B cell (primary cell): ENCODE measurements at regions of chr6 and their contacts with region 1.

Region 1: GRCh38 chr6:12233693-12234571 is 56.2 kb upstream of the EDN1 start:
- DNase-seq: peak; percentile 75
- ATAC-seq: peak; percentile 77
- H3K4me3 ChIP-seq: no peak overlapping the region
- H3K4me3 Mint-ChIP-seq: no peak overlapping the region
- H3K27ac ChIP-seq: no peak overlapping the region
- H3K27ac Mint-ChIP-seq: no peak overlapping the region
- H3K4me1 ChIP-seq: peaks cover 0 to 5% of the 10 kb centered on the region in 2 donors
- H3K4me1 Mint-ChIP-seq: peaks cover 10% of the 10 kb centered on the region
- H3K27me3 ChIP-seq: no peaks in the 10 kb centered on the region
- H3K27me3 Mint-ChIP-seq: no peaks in the 10 kb centered on the region
- CTCF ChIP-seq: peak; percentile 77

Region 2: GRCh38 chr6:11700118-11700718 is 533.7 kb before region 1 on chr6:
- CTCF ChIA-PET with region 1: interaction called, 31 read pairs
- POLR2A ChIA-PET with region 1: no interaction called
- intact Hi-C with region 1: loop called (anchors 1 kb)
- DNase-seq: peak; percentile 61
- ATAC-seq: no peak
- H3K4me3 ChIP-seq: no peak overlapping the region
- H3K4me3 Mint-ChIP-seq: no peak overlapping the region
- H3K27ac ChIP-seq: no peak overlapping the region
- H3K27ac Mint-ChIP-seq: no peak overlapping the region
- H3K4me1 ChIP-seq: no peaks in the 10 kb centered on the region
- H3K4me1 Mint-ChIP-seq: no peaks in the 10 kb centered on the region
- H3K27me3 ChIP-seq: peaks cover 0 to 4% (median 2%) of the 10 kb centered on the region in 4 experiments
- H3K27me3 Mint-ChIP-seq: no peaks in the 10 kb centered on the region
- CTCF ChIP-seq: peak; percentile 69

Region 3: GRCh38 chr6:12033770-12034169 is 200.2 kb before region 1 on chr6:
- CTCF ChIA-PET with region 1: interaction called, 4 read pairs
- POLR2A ChIA-PET with region 1: no interaction called
- intact Hi-C with region 1: loop called (anchors 10 kb)
- DNase-seq: no peak
- ATAC-seq: no peak
- H3K4me3 ChIP-seq: no peak overlapping the region
- H3K4me3 Mint-ChIP-seq: no peak overlapping the region
- H3K27ac ChIP-seq: no peak overlapping the region
- H3K27ac Mint-ChIP-seq: no peak overlapping the region
- H3K4me1 ChIP-seq: peaks cover 21% of the 10 kb centered on the region in 2 donors
- H3K4me1 Mint-ChIP-seq: peaks cover 54% of the 10 kb centered on the region
- H3K27me3 ChIP-seq: no peaks in the 10 kb centered on the region
- H3K27me3 Mint-ChIP-seq: no peaks in the 10 kb centered on the region
- CTCF ChIP-seq: no peak

Region 4: DNA sequence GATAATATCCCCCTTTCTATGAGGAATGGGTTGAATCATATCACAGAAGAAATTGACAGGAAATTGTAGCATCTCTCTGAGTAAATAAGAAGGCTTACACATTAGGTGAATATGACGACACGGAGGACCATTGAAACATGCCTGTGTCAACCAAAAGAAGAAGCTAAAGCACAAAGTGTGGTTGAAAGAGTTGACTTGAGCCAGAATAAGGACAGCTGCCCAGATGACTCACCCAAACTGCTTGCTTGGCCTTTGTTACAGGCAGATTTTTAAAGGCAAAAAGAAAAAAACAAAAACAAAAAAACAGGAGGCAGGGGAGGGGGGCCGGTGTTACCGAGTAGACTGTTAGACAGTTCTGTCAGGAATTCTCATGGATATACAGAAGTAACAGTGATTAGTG is 73.6 kb before region 1 on chr6:
- CTCF ChIA-PET with region 1: no interaction called
- POLR2A ChIA-PET with region 1: no interaction called
- intact Hi-C with region 1: no loop called
- DNase-seq: no peak
- ATAC-seq: no peak
- H3K4me3 ChIP-seq: no peak overlapping the region
- H3K4me3 Mint-ChIP-seq: no peak overlapping the region
- H3K27ac ChIP-seq: no peak overlapping the region
- H3K27ac Mint-ChIP-seq: no peak overlapping the region
- H3K4me1 ChIP-seq: peaks cover 0 to 4% of the 10 kb centered on the region in 2 donors
- H3K4me1 Mint-ChIP-seq: peaks cover 14% of the 10 kb centered on the region
- H3K27me3 ChIP-seq: no peaks in the 10 kb centered on the region
- H3K27me3 Mint-ChIP-seq: no peaks in the 10 kb centered on the region
- CTCF ChIP-seq: no peak

Region 5: GRCh38 chr6:12245763-12246718 is 12.1 kb after region 1 on chr6:
- CTCF ChIA-PET with region 1: interaction called, 10 read pairs
- POLR2A ChIA-PET with region 1: no interaction called
- intact Hi-C with region 1: no loop called
- DNase-seq: no peak
- ATAC-seq: no peak
- H3K4me3 ChIP-seq: no peak overlapping the region
- H3K4me3 Mint-ChIP-seq: no peak overlapping the region
- H3K27ac ChIP-seq: no peak overlapping the region
- H3K27ac Mint-ChIP-seq: no peak overlapping the region
- H3K4me1 ChIP-seq: no peaks in the 10 kb centered on the region
- H3K4me1 Mint-ChIP-seq: no peaks in the 10 kb centered on the region
- H3K27me3 ChIP-seq: no peaks in the 10 kb centered on the region
- H3K27me3 Mint-ChIP-seq: peaks cover 25% of the 10 kb centered on the region
- CTCF ChIP-seq: no peak